ENCODE measurements at regions of chr2 and their contacts with region 1.

Region 1: DNA sequence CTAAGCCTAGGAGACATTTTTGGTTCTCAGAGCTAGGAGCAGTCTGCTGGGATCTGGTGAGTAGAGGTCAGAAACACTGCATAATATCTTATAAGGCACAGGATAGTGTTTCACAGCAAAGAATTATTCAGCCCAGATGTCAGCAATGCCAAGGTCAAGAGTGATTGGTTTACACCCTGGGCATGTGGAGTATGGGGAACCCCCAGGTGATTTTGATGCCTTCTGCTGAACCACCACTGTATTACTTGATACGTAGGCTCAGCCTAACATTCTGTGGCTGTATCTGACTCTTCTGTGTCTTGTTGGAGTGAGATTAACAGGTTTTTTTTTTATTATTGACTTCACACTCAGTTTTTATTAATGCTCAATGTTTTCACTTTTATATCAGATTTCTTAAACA is 6.0 kb downstream of the DDX18 start:
- DNase-seq: no peak
- H3K4me3 ChIP-seq: no peak overlapping the region
- H3K27ac ChIP-seq: no peak overlapping the region
- H3K4me1 ChIP-seq: peaks cover 2% of the 10 kb centered on the region
- H3K27me3 ChIP-seq: no peaks in the 10 kb centered on the region
- CTCF ChIP-seq: no peak
- EP300 ChIP-seq: no peak
- POLR2A ChIP-seq: no peak

Region 2: DNA sequence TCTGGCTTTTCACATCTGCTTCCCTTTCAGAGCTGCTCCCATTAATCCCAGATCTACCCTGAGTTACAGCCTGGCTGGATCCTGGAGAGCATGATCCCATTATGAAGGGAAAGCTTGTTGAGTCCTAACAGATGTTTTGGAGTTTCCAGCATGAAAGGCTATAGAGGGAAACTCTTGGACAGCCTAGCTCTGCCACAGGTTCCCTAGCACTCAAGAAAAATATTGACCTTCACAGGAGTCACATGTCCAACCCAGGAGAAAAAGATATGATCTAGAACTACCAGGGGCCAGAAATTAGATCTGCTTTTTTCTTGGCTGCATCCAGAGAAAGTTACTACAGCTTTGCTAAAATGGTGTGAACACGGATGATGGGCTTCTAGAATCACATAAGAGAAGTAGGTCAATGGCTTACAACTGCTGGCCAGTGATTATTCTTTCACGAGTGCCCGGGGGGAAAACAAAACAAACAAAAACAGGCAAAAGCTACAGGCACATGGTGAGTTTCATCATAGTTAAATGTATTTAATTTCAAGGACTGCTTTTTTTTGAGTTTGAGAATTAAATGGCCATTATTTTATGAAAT is 177.5 kb after region 1 on chr2:
- intact Hi-C with region 1: loop called in 1 of 4 experiments (anchors 10 kb)
- DNase-seq: no peak
- H3K4me3 ChIP-seq: no peak overlapping the region
- H3K27ac ChIP-seq: no peak overlapping the region
- H3K4me1 ChIP-seq: no peaks in the 10 kb centered on the region
- H3K27me3 ChIP-seq: no peaks in the 10 kb centered on the region
- CTCF ChIP-seq: no peak
- EP300 ChIP-seq: no peak
- POLR2A ChIP-seq: no peak

Measured in ovary (tissue), 10 donors.